Ascending aorta (tissue), 2 donors: ENCODE measurements at regions of chr19 and their contacts with region 1.

Region 1: DNA sequence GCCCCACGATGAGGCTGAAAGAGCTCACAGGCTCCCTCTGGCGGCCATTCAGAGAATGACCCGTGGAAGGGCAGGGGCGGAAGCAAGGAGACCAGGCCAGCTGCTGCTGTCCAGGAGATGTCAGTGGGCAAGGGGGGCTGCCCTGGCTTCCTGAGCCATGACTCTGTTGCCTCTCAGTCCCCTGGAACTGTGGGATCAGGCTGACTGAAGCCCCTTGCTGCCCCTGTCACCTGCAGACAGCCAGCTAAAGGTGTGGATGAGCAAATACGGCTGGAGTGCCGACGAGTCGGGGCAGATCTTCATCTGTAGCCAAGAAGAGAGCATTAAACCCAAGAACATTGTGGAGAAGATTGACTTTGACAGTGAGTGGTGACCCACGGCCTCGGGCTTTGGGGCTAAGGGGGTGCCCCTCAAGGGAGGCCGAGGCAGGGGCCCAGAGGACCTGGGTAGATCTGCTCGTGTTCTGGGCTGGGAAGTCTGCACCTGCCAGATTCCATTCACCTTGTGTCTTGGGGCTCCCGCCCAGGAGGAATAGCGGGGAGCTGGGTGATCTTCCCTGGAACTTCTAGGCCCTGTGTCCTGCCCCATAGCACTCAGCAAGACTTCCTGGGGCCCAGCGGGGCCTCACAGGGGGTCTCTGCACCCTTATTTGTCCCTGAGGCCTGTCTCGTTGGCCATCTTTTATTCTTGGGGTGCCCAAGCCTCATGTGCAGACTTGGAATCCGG is 12.5 kb upstream of the ACTN4 start:
- DNase-seq: peak in 1 of 2 donors; percentile 85
- H3K4me3 ChIP-seq: no peak overlapping the region
- H3K27ac ChIP-seq: no peak overlapping the region
- H3K4me1 ChIP-seq: peaks cover 0 to 3% of the 10 kb centered on the region in 2 donors
- H3K27me3 ChIP-seq: no peaks in the 10 kb centered on the region
- CTCF ChIP-seq: peak; percentile 87 to 96 (median 89)

Region 2: GRCh38 chr19:38402967-38403861 is 231.7 kb before region 1 on chr19 and contains the start of gene FAM98C:
- intact Hi-C with region 1: loop called (anchors 2 kb)
- DNase-seq: peak; percentile 92 to 99
- H3K4me3 ChIP-seq: peak within 1 kb of the TSS; percentile 93
- H3K27ac ChIP-seq: peak within 1 kb of the TSS; percentile 72 to 73
- H3K4me1 ChIP-seq: peaks cover 0 to 11% of the 10 kb centered on the region in 2 donors
- H3K27me3 ChIP-seq: no peaks in the 10 kb centered on the region
- CTCF ChIP-seq: peak; percentile 95 to 97 (median 96)
- total RNA-seq, gene FAM98C: 11.1 TPM

Region 3: GRCh38 chr19:38514812-38515633 is 119.9 kb before region 1 on chr19:
- intact Hi-C with region 1: loop called (anchors 2 kb)
- DNase-seq: peak in 1 of 2 donors; percentile 76
- H3K4me3 ChIP-seq: no peak overlapping the region
- H3K27ac ChIP-seq: no peak overlapping the region
- H3K4me1 ChIP-seq: no peaks in the 10 kb centered on the region
- H3K27me3 ChIP-seq: no peaks in the 10 kb centered on the region
- CTCF ChIP-seq: peak; percentile 70 to 90 (median 89)

Region 4: DNA sequence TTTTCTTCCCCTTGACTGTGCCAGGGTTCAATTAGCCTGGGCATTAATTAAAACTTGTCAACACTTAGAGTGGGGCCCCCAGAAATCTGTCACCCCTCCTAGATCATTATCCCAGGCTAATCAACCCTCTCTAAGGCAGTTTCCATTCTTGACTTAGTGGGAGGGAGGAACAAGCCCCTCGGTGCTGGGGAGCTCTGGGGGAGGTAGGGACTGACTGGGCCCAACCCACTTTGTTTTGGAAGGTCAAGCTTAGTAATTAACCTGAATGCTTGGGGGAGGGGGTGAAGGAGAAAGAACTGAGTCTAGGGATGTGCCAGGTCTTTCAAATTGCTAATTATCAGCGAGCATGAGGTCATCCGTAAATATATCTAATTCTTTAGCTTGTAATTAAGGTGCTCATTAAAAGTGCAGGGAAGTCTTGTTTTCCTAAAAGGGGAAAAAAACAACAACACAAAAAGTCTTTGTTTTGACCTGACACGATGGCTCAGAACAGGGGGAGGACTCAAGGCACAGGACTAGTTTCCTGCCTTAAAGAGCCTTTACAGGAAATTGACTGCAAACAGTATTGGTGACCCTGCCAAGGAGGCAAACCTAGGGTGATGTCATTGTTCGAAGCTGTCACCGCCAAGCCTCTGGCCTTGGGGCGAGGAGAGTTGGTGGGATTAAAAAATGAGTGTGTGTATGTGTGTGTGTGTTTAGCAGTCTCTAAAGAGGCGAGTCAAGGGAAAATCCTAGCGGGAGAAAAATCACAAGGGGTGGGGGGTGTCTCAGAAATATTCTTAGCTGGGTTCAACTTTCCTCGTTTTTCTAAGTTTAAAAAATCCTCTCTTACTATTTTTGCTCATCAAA is 32.0 kb after region 1 on chr19:
- intact Hi-C with region 1: no loop called
- DNase-seq: peak in 1 of 2 donors; percentile 92
- H3K4me3 ChIP-seq: peak overlapping the region in 1 of 2 donors; percentile 25
- H3K27ac ChIP-seq: peak overlapping the region; percentile 92 to 96
- H3K4me1 ChIP-seq: peaks cover 59 to 96% of the 10 kb centered on the region in 2 donors
- H3K27me3 ChIP-seq: no peaks in the 10 kb centered on the region
- CTCF ChIP-seq: no peak

Region 5: GRCh38 chr19:38815059-38816001 is 180.4 kb after region 1 on chr19:
- intact Hi-C with region 1: no loop called
- DNase-seq: no peak
- H3K4me3 ChIP-seq: no peak overlapping the region
- H3K27ac ChIP-seq: no peak overlapping the region
- H3K4me1 ChIP-seq: no peaks in the 10 kb centered on the region
- H3K27me3 ChIP-seq: no peaks in the 10 kb centered on the region
- CTCF ChIP-seq: no peak

Region 6: DNA sequence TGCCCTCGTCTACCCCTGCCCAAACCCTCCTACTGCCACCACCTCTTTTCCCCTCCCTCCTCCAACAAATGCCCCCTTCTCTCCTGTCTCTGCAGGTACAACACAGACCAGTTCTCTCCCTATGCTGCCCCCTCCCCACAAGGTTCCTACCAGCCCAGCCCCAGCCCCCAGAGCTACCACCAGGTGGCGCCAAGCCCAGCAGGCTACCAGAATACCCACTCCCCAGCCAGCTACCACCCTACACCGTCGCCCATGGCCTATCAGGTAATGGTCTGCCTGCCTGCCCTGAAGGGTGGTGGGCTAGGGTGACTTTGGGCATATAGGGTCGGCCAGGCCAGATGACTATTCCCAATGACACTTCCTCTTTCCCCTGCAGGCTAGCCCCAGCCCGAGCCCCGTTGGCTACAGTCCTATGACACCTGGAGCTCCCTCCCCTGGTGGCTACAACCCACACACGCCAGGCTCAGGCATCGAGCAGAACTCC is 839.3 kb after region 1 on chr19:
- intact Hi-C with region 1: no loop called
- DNase-seq: peak in 1 of 2 donors; percentile 73
- H3K4me3 ChIP-seq: no peak overlapping the region
- H3K27ac ChIP-seq: no peak overlapping the region
- H3K4me1 ChIP-seq: no peaks in the 10 kb centered on the region
- H3K27me3 ChIP-seq: no peaks in the 10 kb centered on the region
- CTCF ChIP-seq: peak; percentile 29 to 86 (median 79)